ENCODE measurements at regions of chr1 and their contacts with region 1.

Region 1: GRCh38 chr1:151539990-151540981 is at the start of gene TUFT1:
- DNase-seq: peak; percentile 89
- ATAC-seq: peak; percentile 86
- H3K4me3 ChIP-seq: peak within 1 kb of the TSS; percentile 73
- H3K27ac ChIP-seq: peak within 1 kb of the TSS; percentile 35
- H3K4me1 ChIP-seq: peaks cover 28% of the 10 kb centered on the region
- H3K27me3 ChIP-seq: no peaks in the 10 kb centered on the region
- CTCF ChIP-seq: no peak
- POLR2A ChIP-seq: peak; percentile 98
- RAD21 ChIP-seq: no peak
- total RNA-seq, gene TUFT1: 30.3 and 33.3 TPM in 2 replicates

Region 2: GRCh38 chr1:149886396-149887195 is 1653.7 kb before region 1 on chr1:
- CTCF ChIA-PET with region 1: no interaction called
- POLR2A ChIA-PET with region 1: no interaction called
- dilution Hi-C with region 1: no loop called
- in situ Hi-C with region 1: no loop called
- intact Hi-C with region 1: no loop called
- DNase-seq: peak; percentile 100
- ATAC-seq: peak; percentile 76
- H3K4me3 ChIP-seq: peak overlapping the region; percentile 50
- H3K27ac ChIP-seq: peak overlapping the region; percentile 91
- H3K4me1 ChIP-seq: peaks cover 3% of the 10 kb centered on the region; the same call in 1 of the 2 replicates
- H3K27me3 ChIP-seq: no peaks in the 10 kb centered on the region
- CTCF ChIP-seq: no peak
- POLR2A ChIP-seq: peak; percentile 97
- RAD21 ChIP-seq: no peak

Region 3: DNA sequence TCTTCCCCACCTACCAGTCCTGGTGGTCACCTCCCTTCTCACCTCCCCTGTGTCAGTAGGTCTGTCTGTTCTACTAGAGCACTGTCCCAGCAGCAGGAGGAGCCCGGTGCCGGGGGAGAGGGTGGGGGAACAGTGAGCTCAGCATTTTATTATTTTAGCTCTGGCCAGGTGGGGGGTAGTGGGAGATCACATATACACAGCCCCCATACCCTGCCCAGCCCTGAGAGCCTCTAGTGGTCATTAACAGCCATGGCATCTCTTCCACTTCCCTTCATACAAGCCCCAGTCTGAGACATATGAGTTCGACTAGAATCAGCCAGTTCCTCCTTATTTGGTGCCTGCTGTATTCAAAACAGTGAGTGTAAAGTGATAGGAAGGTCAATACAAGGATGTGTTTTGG is 364.4 kb before region 1 on chr1 and contains the start of gene TMOD4:
- CTCF ChIA-PET with region 1: no interaction called
- POLR2A ChIA-PET with region 1: no interaction called
- dilution Hi-C with region 1: no loop called
- in situ Hi-C with region 1: no loop called
- intact Hi-C with region 1: no loop called
- DNase-seq: peak; percentile 28
- ATAC-seq: peak; percentile 88
- H3K4me3 ChIP-seq: no peak within 1 kb of the TSS
- H3K27ac ChIP-seq: no peak within 1 kb of the TSS
- H3K4me1 ChIP-seq: peaks cover 2% of the 10 kb centered on the region; the same call in 1 of the 2 replicates
- H3K27me3 ChIP-seq: no peaks in the 10 kb centered on the region
- CTCF ChIP-seq: peak; percentile 46
- POLR2A ChIP-seq: no peak
- RAD21 ChIP-seq: peak; percentile 27; the same call in 1 of the 2 replicates
- total RNA-seq, gene TMOD4: not detected in 2 replicates

Region 4: DNA sequence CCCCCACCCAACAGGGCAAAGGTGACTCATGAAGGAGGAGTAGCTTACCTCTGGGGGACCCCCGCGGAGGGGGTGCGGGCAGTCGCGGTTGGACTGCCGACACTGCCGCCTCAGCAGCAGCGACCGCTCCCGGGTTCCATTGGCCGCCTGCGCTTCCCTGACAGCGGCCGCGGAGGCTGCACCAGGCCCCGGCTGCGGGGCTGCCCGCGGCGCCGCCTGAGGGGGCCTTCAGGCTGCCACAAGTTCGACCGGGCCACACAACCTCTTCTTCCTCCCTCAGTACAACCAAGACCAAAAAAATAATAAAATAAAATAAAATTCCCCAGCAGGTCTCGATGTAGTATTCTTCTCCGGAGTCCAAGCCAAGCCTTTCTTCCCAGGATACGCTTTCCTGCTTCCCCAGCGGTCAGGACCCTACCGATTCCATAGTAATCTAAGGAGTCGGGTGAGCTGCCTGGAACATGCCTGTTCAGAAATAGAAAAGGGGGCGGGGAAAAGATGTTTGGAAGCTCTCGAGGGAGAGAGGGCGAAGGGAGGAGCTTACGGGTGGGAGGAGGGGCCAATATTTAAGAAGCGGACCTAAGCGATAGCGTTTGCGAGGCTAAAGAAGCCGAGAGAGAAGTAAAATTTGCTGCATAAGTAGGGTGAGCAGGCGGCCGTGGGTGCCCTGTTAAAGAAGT is 212.9 kb before region 1 on chr1 and contains the start of gene PI4KB:
- CTCF ChIA-PET with region 1: no interaction called
- POLR2A ChIA-PET with region 1: no interaction called
- dilution Hi-C with region 1: no loop called
- in situ Hi-C with region 1: no loop called
- intact Hi-C with region 1: loop called (anchors 10 kb)
- DNase-seq: peak; percentile 98
- ATAC-seq: peak; percentile 96
- H3K4me3 ChIP-seq: peak within 1 kb of the TSS; percentile 88
- H3K27ac ChIP-seq: peak within 1 kb of the TSS; percentile 88
- H3K4me1 ChIP-seq: peaks cover 9% of the 10 kb centered on the region
- H3K27me3 ChIP-seq: no peaks in the 10 kb centered on the region
- CTCF ChIP-seq: no peak
- POLR2A ChIP-seq: peak; percentile 79
- RAD21 ChIP-seq: no peak
- total RNA-seq, gene PI4KB: 77.2 and 94.5 TPM in 2 replicates

Region 5: GRCh38 chr1:151459331-151460046 is 80.8 kb before region 1 on chr1 and contains the start of gene POGZ:
- CTCF ChIA-PET with region 1: no interaction called
- POLR2A ChIA-PET with region 1: no interaction called
- dilution Hi-C with region 1: no loop called
- in situ Hi-C with region 1: no loop called
- intact Hi-C with region 1: loop called (anchors 2 kb)
- DNase-seq: peak; percentile 98
- ATAC-seq: peak; percentile 84
- H3K4me3 ChIP-seq: peak within 1 kb of the TSS; percentile 95
- H3K27ac ChIP-seq: peak within 1 kb of the TSS; percentile 100
- H3K4me1 ChIP-seq: peaks cover 5% of the 10 kb centered on the region
- H3K27me3 ChIP-seq: peaks cover 8% of the 10 kb centered on the region
- CTCF ChIP-seq: no peak
- POLR2A ChIP-seq: peak; percentile 64; the same call in 1 of the 2 replicates
- RAD21 ChIP-seq: no peak
- total RNA-seq, gene POGZ: 15.0 and 20.8 TPM in 2 replicates

Region 6: GRCh38 chr1:151839457-151840405 is 299.4 kb after region 1 on chr1 and contains the start of gene C2CD4D:
- CTCF ChIA-PET with region 1: no interaction called
- POLR2A ChIA-PET with region 1: no interaction called
- dilution Hi-C with region 1: no loop called
- in situ Hi-C with region 1: no loop called
- intact Hi-C with region 1: loop called (anchors 10 kb)
- DNase-seq: no peak
- ATAC-seq: no peak
- H3K4me3 ChIP-seq: peak within 1 kb of the TSS; percentile 36; the same call in 1 of the 2 replicates
- H3K27ac ChIP-seq: no peak within 1 kb of the TSS
- H3K4me1 ChIP-seq: no peaks in the 10 kb centered on the region; the same call in 1 of the 2 replicates
- H3K27me3 ChIP-seq: peaks cover 55% of the 10 kb centered on the region
- CTCF ChIP-seq: no peak
- POLR2A ChIP-seq: no peak
- RAD21 ChIP-seq: no peak
- total RNA-seq, gene C2CD4D: not detected in 2 replicates

Measured in IMR-90 (cell line).